ENCODE measurements at regions of chr19 and their contacts with region 1.

Region 1: GRCh38 chr19:52171321-52172169 is at the start of gene ZNF836:
- DNase-seq: peak; percentile 95
- ATAC-seq: peak; percentile 93
- H3K4me3 Mint-ChIP-seq: peak within 1 kb of the TSS; percentile 88
- H3K27ac Mint-ChIP-seq: peak within 1 kb of the TSS; percentile 97
- H3K4me1 Mint-ChIP-seq: peaks cover 24% of the 10 kb centered on the region
- H3K27me3 Mint-ChIP-seq: no peaks in the 10 kb centered on the region
- total RNA-seq, gene ZNF836: 15.5 to 18.7 TPM

Region 2: GRCh38 chr19:52189735-52190486 is 18.4 kb after region 1 on chr19 and contains the start of gene PPP2R1A:
- CTCF ChIA-PET with region 1: interaction called, 5 read pairs
- POLR2A ChIA-PET with region 1: interaction called, 25 read pairs
- DNase-seq: peak; percentile 99
- ATAC-seq: peak; percentile 89
- H3K4me3 Mint-ChIP-seq: peak within 1 kb of the TSS; percentile 96
- H3K27ac Mint-ChIP-seq: peak within 1 kb of the TSS; percentile 100
- H3K4me1 Mint-ChIP-seq: peaks cover 32% of the 10 kb centered on the region
- H3K27me3 Mint-ChIP-seq: no peaks in the 10 kb centered on the region
- total RNA-seq, gene PPP2R1A: 223 to 225 TPM

Measured in activated CD8-positive, alpha-beta T cell treated with anti-CD3 and anti-CD28 coated beads, Interleukin-2, amount 10 ng/mL, durations not matched to agents 7 days and 5 days (primary cell).